Naive thymus-derived CD4-positive, alpha-beta T cell (primary cell): ENCODE measurements at regions of chr14 and their contacts with region 1.

Region 1: DNA sequence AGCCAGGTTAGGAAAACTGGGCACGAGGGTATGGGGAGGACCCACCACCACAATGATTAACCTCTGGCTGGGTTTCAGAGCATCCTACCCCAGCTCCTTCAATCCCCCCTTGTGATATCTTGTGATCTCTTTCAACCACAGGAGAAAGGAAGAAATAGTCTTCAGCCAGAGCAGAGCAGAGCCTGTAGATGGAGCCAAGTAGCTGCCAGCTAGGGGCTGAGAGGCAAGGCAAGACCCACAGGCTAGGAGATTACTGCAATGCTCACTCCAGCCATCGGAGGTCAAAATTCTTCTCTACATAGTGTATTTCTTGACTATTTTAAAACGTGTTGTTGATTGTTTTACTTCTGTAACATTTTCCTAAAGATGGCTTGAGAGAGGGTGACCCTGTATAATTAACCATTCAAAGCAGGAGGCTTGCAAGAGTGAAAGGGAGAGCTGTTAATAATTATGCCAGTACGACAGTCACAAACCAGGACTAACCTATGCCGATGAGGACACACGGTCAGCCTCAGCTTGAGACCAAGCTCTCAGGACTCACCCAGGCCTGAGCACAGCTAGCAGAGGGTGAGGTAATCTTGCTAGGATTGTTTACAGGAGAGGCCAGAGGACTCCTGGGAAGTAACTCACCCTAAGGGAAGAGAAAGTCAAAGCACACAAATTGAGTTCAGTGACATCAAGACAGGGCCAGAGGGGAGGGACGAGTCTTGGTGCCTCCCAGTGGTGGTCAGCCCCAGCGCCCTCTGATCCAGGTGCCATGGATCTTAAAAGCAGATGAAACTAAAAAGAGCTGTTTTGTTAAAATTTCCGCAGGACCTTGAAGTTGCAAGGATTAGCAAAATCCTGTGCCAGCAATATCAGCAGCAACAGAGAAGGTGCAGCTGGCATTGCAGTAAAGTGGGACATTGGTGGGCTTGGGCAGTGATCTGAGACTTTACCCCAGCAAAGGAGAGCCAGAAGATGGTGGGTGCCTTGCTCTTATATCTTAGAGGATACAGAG is 29.8 kb upstream of the CDKN3 start:
- DNase-seq: peak in 6 of 9 donors; percentile 13 to 46 (median 28)
- ATAC-seq: peak; percentile 83
- H3K4me3 ChIP-seq: no peak overlapping the region
- H3K4me3 Mint-ChIP-seq: no peak overlapping the region
- H3K27ac ChIP-seq: no peak overlapping the region
- H3K27ac Mint-ChIP-seq: no peak overlapping the region
- H3K4me1 ChIP-seq: no peaks in the 10 kb centered on the region
- H3K4me1 Mint-ChIP-seq: peaks cover 0 to 1% (median 0%) of the 10 kb centered on the region in 7 donors
- H3K27me3 ChIP-seq: no peaks in the 10 kb centered on the region
- H3K27me3 Mint-ChIP-seq: peaks cover 0 to 29% (median 15%) of the 10 kb centered on the region in 5 donors

Region 2: GRCh38 chr14:54420013-54420809 is 53.2 kb after region 1 on chr14:
- CTCF ChIA-PET with region 1: interaction called, 3 read pairs
- POLR2A ChIA-PET with region 1: no interaction called
- intact Hi-C with region 1: loop called in 1 of 2 experiments (anchors 1 kb)
- DNase-seq: peak in 4 of 9 donors; percentile 7 to 27 (median 11)
- ATAC-seq: peak; percentile 53
- H3K4me3 ChIP-seq: no peak overlapping the region
- H3K4me3 Mint-ChIP-seq: no peak overlapping the region
- H3K27ac ChIP-seq: no peak overlapping the region
- H3K27ac Mint-ChIP-seq: peak overlapping the region in 7 of 9 donors; percentile 3 to 66 (median 58)
- H3K4me1 ChIP-seq: no peaks in the 10 kb centered on the region
- H3K4me1 Mint-ChIP-seq: peaks cover 0 to 6% (median 2%) of the 10 kb centered on the region in 7 donors
- H3K27me3 ChIP-seq: no peaks in the 10 kb centered on the region
- H3K27me3 Mint-ChIP-seq: no peaks in the 10 kb centered on the region

Region 3: DNA sequence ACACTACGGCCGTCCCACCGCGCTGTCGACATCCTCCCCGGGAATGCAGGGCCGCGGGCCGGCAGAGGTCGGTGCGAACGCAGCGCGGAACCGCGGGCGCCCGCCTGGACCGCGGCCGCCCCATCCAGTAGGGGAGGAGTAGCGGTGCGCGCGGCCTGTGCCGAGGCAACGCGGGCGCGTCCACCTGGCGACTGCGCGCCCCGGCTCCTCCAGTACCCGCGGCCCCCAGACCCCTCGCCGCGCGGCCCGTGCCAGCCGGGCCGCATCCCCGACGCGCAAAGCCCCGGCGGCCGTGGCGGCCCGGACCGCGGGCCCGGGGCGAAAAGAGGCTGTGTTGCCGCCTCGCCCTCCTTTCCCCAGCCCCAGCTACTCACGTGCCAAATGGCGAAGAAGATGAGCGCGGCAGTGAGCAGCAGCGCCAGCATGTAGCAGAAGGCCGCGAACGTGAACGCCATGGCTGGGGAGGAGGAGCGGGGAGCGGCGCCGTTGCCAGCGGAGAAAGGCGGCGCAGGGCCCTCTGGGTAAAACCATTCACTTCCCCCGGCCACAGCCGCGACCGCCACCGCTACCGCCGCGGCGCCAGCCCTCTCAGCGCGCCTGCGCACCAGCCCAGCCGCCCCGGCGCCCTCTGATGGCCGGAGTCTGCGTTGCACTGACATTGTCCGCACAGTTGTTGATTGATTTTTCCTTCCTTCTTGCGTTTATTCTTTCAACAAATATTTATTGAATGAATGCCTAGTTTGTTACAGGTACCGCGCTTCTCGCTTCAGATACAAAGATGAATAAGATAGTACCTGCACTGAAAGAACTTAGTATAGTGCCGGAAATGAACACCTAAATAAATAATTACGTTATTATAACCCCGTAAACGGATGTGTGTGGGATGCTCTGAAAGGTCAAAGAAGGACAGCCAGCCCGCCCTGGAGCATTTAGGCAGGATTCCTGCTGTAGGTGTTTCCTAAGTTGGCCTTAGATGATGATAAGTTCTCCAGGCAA is 74.1 kb after region 1 on chr14 and contains the start of gene CNIH1:
- CTCF ChIA-PET with region 1: no interaction called
- POLR2A ChIA-PET with region 1: no interaction called
- intact Hi-C with region 1: loop called (anchors 1 to 2 kb)
- DNase-seq: peak; percentile 85 to 99 (median 93)
- ATAC-seq: peak; percentile 97
- H3K4me3 ChIP-seq: peak within 1 kb of the TSS; percentile 73
- H3K4me3 Mint-ChIP-seq: peak within 1 kb of the TSS; percentile 85 to 97 (median 94)
- H3K27ac ChIP-seq: peak within 1 kb of the TSS; percentile 80
- H3K27ac Mint-ChIP-seq: peak within 1 kb of the TSS; percentile 87 to 98 (median 95)
- H3K4me1 ChIP-seq: peaks cover 9 to 23% of the 10 kb centered on the region in 2 donors
- H3K4me1 Mint-ChIP-seq: peaks cover 23 to 54% (median 49%) of the 10 kb centered on the region in 7 donors
- H3K27me3 ChIP-seq: no peaks in the 10 kb centered on the region
- H3K27me3 Mint-ChIP-seq: peaks cover 0 to 2% (median 0%) of the 10 kb centered on the region in 5 donors
- total RNA-seq, gene CNIH1: 50.5 to 87.9 (median 57.8) TPM

Region 4: DNA sequence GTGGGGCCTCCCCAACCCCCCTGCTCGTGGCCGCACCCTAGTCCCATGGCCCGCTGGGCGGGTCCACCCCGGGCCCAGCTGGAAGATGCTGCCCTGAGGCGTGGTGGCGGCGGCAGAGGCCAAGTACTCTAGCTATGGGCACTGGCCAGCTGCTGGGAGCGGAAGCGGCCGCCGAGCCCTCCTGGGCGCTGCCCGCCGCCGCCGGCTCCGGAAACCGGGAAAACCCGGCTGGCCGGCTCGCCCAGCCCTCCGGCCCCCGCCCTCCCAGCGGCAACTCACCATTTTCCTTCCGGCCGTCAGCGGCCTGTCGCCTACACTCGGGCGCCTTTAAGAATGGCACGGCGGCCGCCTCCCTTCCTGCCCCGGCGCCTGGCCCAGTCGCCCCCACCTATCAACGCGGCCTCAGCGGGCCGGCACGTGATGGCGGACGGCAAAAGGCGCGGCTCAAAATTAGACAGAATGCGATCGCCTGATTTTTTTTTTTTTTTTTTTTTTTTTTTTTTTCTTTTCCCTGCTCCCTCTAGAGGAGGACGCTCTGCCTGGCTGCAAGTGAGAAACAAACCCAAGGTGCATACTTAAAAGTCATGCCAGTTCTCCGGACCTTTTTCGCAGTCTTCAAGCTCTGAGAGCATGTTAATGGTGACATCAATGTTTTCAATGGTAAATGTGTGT is 121.7 kb after region 1 on chr14 and contains the start of gene GMFB:
- CTCF ChIA-PET with region 1: no interaction called
- POLR2A ChIA-PET with region 1: no interaction called
- intact Hi-C with region 1: loop called in 1 of 2 experiments (anchors 1 kb)
- DNase-seq: peak; percentile 72 to 88 (median 84)
- ATAC-seq: peak; percentile 97
- H3K4me3 ChIP-seq: peak within 1 kb of the TSS; percentile 65
- H3K4me3 Mint-ChIP-seq: peak within 1 kb of the TSS; percentile 80 to 96 (median 92)
- H3K27ac ChIP-seq: peak within 1 kb of the TSS; percentile 86
- H3K27ac Mint-ChIP-seq: peak within 1 kb of the TSS; percentile 77 to 99 (median 97)
- H3K4me1 ChIP-seq: peaks cover 17 to 18% of the 10 kb centered on the region in 2 donors
- H3K4me1 Mint-ChIP-seq: peaks cover 42 to 69% (median 63%) of the 10 kb centered on the region in 7 donors
- H3K27me3 ChIP-seq: no peaks in the 10 kb centered on the region
- H3K27me3 Mint-ChIP-seq: peaks cover 0 to 3% (median 0%) of the 10 kb centered on the region in 5 donors
- total RNA-seq, gene GMFB: 28.9 to 39.9 (median 34.7) TPM